ENCODE measurements at regions of chr1 and their contacts with region 1.

Region 1: DNA sequence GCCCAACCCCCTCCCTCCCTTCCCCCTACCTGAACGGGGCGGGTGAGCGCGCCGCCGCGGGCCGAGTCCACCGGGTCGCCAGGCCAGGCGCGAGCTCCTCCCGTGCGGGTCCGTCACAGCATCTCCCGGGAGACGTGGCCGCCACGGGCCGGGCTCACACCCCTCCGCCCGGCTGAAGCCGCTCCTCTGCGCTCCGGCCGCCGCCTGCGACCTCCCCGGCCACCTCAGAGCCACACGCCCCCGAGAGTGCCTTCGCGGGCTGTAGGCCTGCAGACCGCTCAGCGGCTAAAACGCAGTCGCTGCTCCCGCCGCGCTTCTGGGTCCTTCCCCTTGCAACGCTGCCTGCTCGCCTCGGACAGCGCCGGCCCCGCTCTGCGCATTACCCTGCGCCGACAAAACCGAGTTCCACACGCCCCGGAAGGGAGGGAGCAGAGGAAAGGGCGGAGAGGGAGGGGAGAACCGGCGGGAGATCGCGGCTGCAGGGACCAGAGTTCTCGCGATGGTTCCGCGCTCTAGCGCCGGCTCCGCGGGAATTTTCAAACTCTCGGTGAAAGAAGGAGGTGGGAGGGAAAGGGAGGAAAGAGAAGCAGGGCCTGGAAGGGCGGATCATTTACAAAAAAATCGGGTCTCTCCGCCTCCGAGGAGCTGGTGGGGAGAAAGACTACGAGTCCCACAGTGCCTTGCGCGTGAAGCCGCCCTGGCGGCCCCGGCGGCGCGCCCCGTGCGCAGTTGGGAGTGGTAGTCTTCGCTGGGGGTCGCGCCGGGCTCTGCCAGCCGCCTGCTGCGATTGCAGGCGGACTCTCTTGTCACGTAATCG is at the start of gene AHCTF1:
- DNase-seq: peak; percentile 86 to 98 (median 95)
- ATAC-seq: peak; percentile 95
- H3K4me3 ChIP-seq: peak within 1 kb of the TSS; percentile 87
- H3K4me3 Mint-ChIP-seq: peak within 1 kb of the TSS; percentile 91 to 98 (median 96)
- H3K27ac ChIP-seq: peak within 1 kb of the TSS; percentile 86
- H3K27ac Mint-ChIP-seq: peak within 1 kb of the TSS; percentile 92 to 99 (median 96)
- H3K4me1 ChIP-seq: peaks cover 7 to 8% of the 10 kb centered on the region in 2 donors
- H3K4me1 Mint-ChIP-seq: peaks cover 30 to 50% (median 35%) of the 10 kb centered on the region in 7 donors
- H3K27me3 ChIP-seq: no peaks in the 10 kb centered on the region
- H3K27me3 Mint-ChIP-seq: peaks cover 0 to 4% (median 0%) of the 10 kb centered on the region in 5 donors
- total RNA-seq, gene AHCTF1: 31.8 to 66.5 (median 57.3) TPM

Region 2: DNA sequence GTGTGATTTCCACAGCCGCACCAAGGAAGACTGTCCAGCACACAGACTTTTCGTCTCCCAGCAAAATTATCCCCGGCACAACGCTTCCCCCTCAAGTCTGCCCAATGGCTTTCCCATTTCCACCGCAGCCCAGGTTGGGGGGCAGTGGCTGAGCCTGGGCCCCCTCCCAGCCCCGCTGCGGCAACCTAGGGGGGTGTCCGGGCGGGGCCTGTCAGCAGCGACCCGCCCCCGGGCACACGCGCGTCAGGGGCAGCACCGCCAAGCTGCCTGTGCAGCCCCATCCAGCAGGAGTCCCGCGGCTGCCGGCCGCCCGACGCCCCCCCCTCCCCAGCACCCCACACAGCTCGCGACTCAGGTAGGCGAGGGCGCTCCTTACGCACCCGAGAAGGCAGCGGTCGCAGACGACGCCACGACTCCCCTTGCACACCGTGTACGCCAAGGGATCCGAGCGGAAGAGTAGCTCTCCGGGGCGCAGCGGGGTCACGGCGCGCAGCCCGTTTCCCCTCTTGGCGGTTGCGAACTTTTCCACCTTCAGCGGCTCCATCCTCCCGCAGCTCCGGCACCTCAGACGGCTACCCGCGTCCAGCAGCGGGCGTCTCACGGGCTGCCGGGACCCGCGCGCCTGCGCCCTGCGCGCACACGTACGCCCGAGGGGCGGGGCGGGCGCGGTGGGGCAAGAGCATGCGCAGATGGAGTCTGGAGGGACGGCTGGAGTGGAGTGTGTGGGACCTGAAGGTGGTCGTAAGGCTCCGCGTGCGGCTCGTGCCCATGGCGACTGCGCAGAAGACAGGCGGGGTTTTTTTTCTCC is 424.9 kb before region 1 on chr1 and contains the start of gene SMYD3:
- CTCF ChIA-PET with region 1: no interaction called
- POLR2A ChIA-PET with region 1: no interaction called
- intact Hi-C with region 1: loop called (anchors 1 kb)
- DNase-seq: peak; percentile 70 to 81 (median 75)
- ATAC-seq: peak; percentile 93
- H3K4me3 ChIP-seq: peak within 1 kb of the TSS; percentile 78
- H3K4me3 Mint-ChIP-seq: peak within 1 kb of the TSS; percentile 88 to 96 (median 93)
- H3K27ac ChIP-seq: peak within 1 kb of the TSS; percentile 75
- H3K27ac Mint-ChIP-seq: peak within 1 kb of the TSS; percentile 78 to 95 (median 91)
- H3K4me1 ChIP-seq: peaks cover 4 to 6% of the 10 kb centered on the region in 2 donors
- H3K4me1 Mint-ChIP-seq: peaks cover 19 to 41% (median 30%) of the 10 kb centered on the region in 7 donors
- H3K27me3 ChIP-seq: no peaks in the 10 kb centered on the region
- H3K27me3 Mint-ChIP-seq: no peaks in the 10 kb centered on the region
- total RNA-seq, gene SMYD3: 19.5 to 28.6 (median 24.2) TPM

Region 3: GRCh38 chr1:246632281-246633087 is 299.3 kb before region 1 on chr1:
- CTCF ChIA-PET with region 1: no interaction called
- POLR2A ChIA-PET with region 1: no interaction called
- intact Hi-C with region 1: no loop called
- DNase-seq: no peak
- ATAC-seq: no peak
- H3K4me3 ChIP-seq: no peak overlapping the region
- H3K4me3 Mint-ChIP-seq: no peak overlapping the region
- H3K27ac ChIP-seq: no peak overlapping the region
- H3K27ac Mint-ChIP-seq: peak overlapping the region in 3 of 9 donors; percentile 19 to 43 (median 39)
- H3K4me1 ChIP-seq: no peaks in the 10 kb centered on the region
- H3K4me1 Mint-ChIP-seq: peaks cover 1 to 17% (median 4%) of the 10 kb centered on the region in 7 donors
- H3K27me3 ChIP-seq: no peaks in the 10 kb centered on the region
- H3K27me3 Mint-ChIP-seq: no peaks in the 10 kb centered on the region

Region 4: DNA sequence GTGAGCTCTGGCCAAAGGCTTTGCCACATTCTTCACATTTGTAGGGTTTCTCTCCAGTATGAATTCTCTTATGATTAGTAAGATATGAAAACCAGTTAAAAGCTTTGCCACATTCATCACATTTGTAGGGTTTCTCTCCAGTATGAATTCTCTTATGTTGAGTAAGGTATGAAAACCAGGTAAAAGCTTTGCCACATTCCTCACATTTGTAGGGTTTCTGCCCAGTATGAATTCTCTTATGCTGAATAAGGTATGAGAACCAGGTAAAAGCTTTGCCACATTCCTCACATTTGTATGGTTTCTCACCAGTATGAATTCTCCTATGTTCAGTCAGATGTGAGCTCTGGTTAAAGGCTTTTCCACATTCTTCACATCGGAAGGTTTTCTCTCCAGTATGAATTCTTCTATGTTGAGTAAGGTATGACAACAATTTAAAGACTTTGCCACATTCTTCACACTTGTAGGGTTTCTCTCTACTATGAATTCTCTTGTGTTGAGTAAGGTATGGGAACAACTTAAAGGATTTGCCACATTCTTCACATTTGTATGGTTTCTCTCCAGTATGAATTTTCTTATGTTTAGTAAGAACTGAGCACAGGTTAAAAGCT is 55.4 kb after region 1 on chr1:
- CTCF ChIA-PET with region 1: no interaction called
- POLR2A ChIA-PET with region 1: no interaction called
- intact Hi-C with region 1: no loop called
- DNase-seq: no peak
- ATAC-seq: no peak
- H3K4me3 ChIP-seq: no peak overlapping the region
- H3K4me3 Mint-ChIP-seq: no peak overlapping the region
- H3K27ac ChIP-seq: no peak overlapping the region
- H3K27ac Mint-ChIP-seq: no peak overlapping the region
- H3K4me1 ChIP-seq: no peaks in the 10 kb centered on the region
- H3K4me1 Mint-ChIP-seq: no peaks in the 10 kb centered on the region
- H3K27me3 ChIP-seq: no peaks in the 10 kb centered on the region
- H3K27me3 Mint-ChIP-seq: peaks cover 0 to 8% (median 0%) of the 10 kb centered on the region in 5 donors

Region 5: GRCh38 chr1:247103859-247104591 is 172.3 kb after region 1 on chr1 and contains the start of gene ZNF669:
- CTCF ChIA-PET with region 1: no interaction called
- POLR2A ChIA-PET with region 1: interaction called, 3 read pairs
- intact Hi-C with region 1: loop called (anchors 1 kb)
- DNase-seq: peak; percentile 84 to 91 (median 89)
- ATAC-seq: peak; percentile 99
- H3K4me3 ChIP-seq: peak within 1 kb of the TSS; percentile 96
- H3K4me3 Mint-ChIP-seq: peak within 1 kb of the TSS; percentile 83 to 93 (median 91)
- H3K27ac ChIP-seq: peak within 1 kb of the TSS; percentile 82
- H3K27ac Mint-ChIP-seq: peak within 1 kb of the TSS; percentile 70 to 93 (median 81)
- H3K4me1 ChIP-seq: peaks cover 3 to 4% of the 10 kb centered on the region in 2 donors
- H3K4me1 Mint-ChIP-seq: peaks cover 6 to 24% (median 16%) of the 10 kb centered on the region in 7 donors
- H3K27me3 ChIP-seq: no peaks in the 10 kb centered on the region
- H3K27me3 Mint-ChIP-seq: peaks cover 15 to 25% (median 21%) of the 10 kb centered on the region in 5 donors
- total RNA-seq, gene ZNF669: 7.9 to 15.8 (median 11.5) TPM

Region 6: DNA sequence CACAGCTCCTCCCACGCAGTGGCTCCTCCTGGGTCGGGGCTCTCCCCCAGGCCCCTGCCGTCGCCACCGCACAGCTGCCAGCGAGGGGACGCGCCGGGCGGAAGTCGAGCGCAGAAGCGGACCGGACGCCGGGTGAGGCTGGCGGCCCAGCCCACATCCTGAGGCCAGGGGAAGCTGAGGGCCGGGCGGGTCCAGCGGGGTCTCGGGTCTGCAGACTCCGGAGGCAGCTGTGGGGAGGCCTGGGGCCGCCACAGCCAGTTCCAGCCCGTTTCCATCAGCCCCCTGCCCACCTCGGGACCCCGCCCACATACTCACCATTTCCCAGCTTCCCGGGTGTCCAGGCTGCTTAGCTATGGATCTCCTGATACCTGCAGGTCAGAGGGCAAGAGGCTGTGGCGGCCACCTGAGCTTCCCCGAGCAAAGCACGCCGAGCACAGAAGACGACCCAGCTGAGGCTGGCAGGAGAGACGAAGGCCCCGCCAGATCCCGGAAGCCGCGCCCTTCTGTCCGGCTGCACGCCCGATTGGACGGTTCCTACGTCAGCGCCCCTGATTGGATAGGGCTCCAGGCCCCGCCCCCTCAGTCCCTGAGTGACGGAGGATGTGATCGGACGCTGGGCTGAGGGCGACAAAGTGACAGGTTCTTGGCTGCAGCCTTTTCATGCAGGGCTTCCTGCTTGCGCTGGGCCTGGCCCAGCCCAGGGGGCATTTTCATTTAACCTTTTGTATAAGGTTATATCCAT is 278.8 kb after region 1 on chr1:
- CTCF ChIA-PET with region 1: no interaction called
- POLR2A ChIA-PET with region 1: interaction called, 10 read pairs
- intact Hi-C with region 1: loop called (anchors 1 kb)
- DNase-seq: peak; percentile 88 to 95 (median 91)
- ATAC-seq: peak; percentile 99
- H3K4me3 ChIP-seq: peak overlapping the region; percentile 77
- H3K4me3 Mint-ChIP-seq: peak overlapping the region; percentile 88 to 97 (median 95)
- H3K27ac ChIP-seq: peak overlapping the region; percentile 83
- H3K27ac Mint-ChIP-seq: peak overlapping the region; percentile 92 to 97 (median 94)
- H3K4me1 ChIP-seq: peaks cover 12 to 13% of the 10 kb centered on the region in 2 donors
- H3K4me1 Mint-ChIP-seq: peaks cover 21 to 84% (median 71%) of the 10 kb centered on the region in 7 donors
- H3K27me3 ChIP-seq: no peaks in the 10 kb centered on the region
- H3K27me3 Mint-ChIP-seq: peaks cover 0 to 3% (median 0%) of the 10 kb centered on the region in 5 donors

Region 7: GRCh38 chr1:247407180-247407616 is 475.4 kb after region 1 on chr1:
- CTCF ChIA-PET with region 1: no interaction called
- POLR2A ChIA-PET with region 1: no interaction called
- intact Hi-C with region 1: loop called in 1 of 2 experiments (anchors 5 kb)
- DNase-seq: peak; percentile 40 to 63 (median 53)
- ATAC-seq: peak; percentile 91
- H3K4me3 ChIP-seq: peak overlapping the region; percentile 30
- H3K4me3 Mint-ChIP-seq: peak overlapping the region; percentile 69 to 89 (median 78)
- H3K27ac ChIP-seq: peak overlapping the region; percentile 50
- H3K27ac Mint-ChIP-seq: peak overlapping the region; percentile 76 to 98 (median 92)
- H3K4me1 ChIP-seq: peaks cover 20 to 33% of the 10 kb centered on the region in 2 donors
- H3K4me1 Mint-ChIP-seq: peaks cover 25 to 42% (median 38%) of the 10 kb centered on the region in 7 donors
- H3K27me3 ChIP-seq: no peaks in the 10 kb centered on the region
- H3K27me3 Mint-ChIP-seq: peaks cover 0 to 46% (median 0%) of the 10 kb centered on the region in 5 donors